Aorta (tissue), 5 donors: ENCODE measurements at regions of chr17 and their contacts with region 1.

Region 1: GRCh38 chr17:73255671-73256181 is 6.0 kb downstream of the CPSF4L start:
- DNase-seq: peak in 1 of 2 donors; percentile 86
- ATAC-seq: peak; percentile 76
- H3K4me3 ChIP-seq: no peak overlapping the region
- H3K27ac ChIP-seq: no peak overlapping the region
- H3K4me1 ChIP-seq: no peaks in the 10 kb centered on the region
- H3K27me3 ChIP-seq: no peaks in the 10 kb centered on the region

Region 2: GRCh38 chr17:73304971-73305812 is 49.5 kb after region 1 on chr17:
- intact Hi-C with region 1: loop called in 1 of 2 experiments (anchors 10 kb)
- DNase-seq: peak; percentile 85 to 88
- ATAC-seq: peak; percentile 74
- H3K4me3 ChIP-seq: peak overlapping the region in 1 of 2 donors; percentile 0
- H3K27ac ChIP-seq: peak overlapping the region; percentile 88 to 98
- H3K4me1 ChIP-seq: peaks cover 3 to 6% of the 10 kb centered on the region in 2 donors
- H3K27me3 ChIP-seq: no peaks in the 10 kb centered on the region

Region 3: GRCh38 chr17:73311781-73312641 is 56.3 kb after region 1 on chr17 and contains the start of gene CDC42EP4:
- intact Hi-C with region 1: loop called (anchors 1 to 10 kb)
- DNase-seq: peak; percentile 97 to 99
- ATAC-seq: peak; percentile 95
- H3K4me3 ChIP-seq: peak within 1 kb of the TSS; percentile 74 to 93
- H3K27ac ChIP-seq: peak within 1 kb of the TSS; percentile 45 to 90
- H3K4me1 ChIP-seq: peaks cover 0 to 1% of the 10 kb centered on the region in 2 donors
- H3K27me3 ChIP-seq: no peaks in the 10 kb centered on the region
- total RNA-seq, gene CDC42EP4: 62.8 to 73.7 TPM

Region 4: DNA sequence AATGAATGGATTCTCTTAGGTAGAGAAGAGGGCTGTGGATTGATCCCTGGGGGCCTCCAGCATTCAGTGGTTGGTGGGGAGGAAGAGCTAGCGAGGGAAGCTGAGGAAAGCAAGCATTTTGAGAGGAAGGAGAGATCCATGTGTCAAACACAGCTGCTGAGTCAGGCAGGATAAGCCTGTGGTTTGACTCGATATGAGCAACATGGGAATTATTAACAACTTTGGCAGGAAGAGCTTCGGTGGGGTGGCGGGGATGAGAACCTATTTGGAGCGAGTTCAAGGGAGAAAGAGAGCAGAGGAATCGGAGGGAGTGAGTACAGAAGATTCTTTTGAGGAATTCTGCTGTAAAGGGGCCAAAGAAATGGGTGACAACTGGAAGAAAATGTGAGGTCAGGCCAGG is 115.6 kb after region 1 on chr17:
- intact Hi-C with region 1: loop called (anchors 1 kb)
- DNase-seq: no peak
- ATAC-seq: no peak
- H3K4me3 ChIP-seq: no peak overlapping the region
- H3K27ac ChIP-seq: no peak overlapping the region
- H3K4me1 ChIP-seq: no peaks in the 10 kb centered on the region
- H3K27me3 ChIP-seq: no peaks in the 10 kb centered on the region